ENCODE measurements at regions of chr12 and their contacts with region 1.

Region 1: GRCh38 chr12:20601668-20602280 is 93.4 kb upstream of the SLCO1C1 start:
- DNase-seq: no peak
- H3K4me3 ChIP-seq: no peak overlapping the region
- H3K27ac ChIP-seq: no peak overlapping the region
- H3K4me1 ChIP-seq: no peaks in the 10 kb centered on the region
- H3K27me3 ChIP-seq: no peaks in the 10 kb centered on the region
- CTCF ChIP-seq: peak in 2 of 3 experiments; percentile 14 to 35; a peak in 2 of 4 replicates
- EP300 ChIP-seq: no peak
- POLR2A ChIP-seq: no peak
- RAD21 ChIP-seq: peak; percentile 48 to 61

Region 2: GRCh38 chr12:20520532-20520931 is 81.2 kb before region 1 on chr12:
- CTCF ChIA-PET with region 1: no interaction called
- POLR2A ChIA-PET with region 1: no interaction called
- DNase-seq: no peak
- H3K4me3 ChIP-seq: no peak overlapping the region
- H3K27ac ChIP-seq: no peak overlapping the region
- H3K4me1 ChIP-seq: no peaks in the 10 kb centered on the region
- H3K27me3 ChIP-seq: no peaks in the 10 kb centered on the region
- CTCF ChIP-seq: no peak
- EP300 ChIP-seq: no peak
- POLR2A ChIP-seq: no peak
- RAD21 ChIP-seq: no peak

Region 3: DNA sequence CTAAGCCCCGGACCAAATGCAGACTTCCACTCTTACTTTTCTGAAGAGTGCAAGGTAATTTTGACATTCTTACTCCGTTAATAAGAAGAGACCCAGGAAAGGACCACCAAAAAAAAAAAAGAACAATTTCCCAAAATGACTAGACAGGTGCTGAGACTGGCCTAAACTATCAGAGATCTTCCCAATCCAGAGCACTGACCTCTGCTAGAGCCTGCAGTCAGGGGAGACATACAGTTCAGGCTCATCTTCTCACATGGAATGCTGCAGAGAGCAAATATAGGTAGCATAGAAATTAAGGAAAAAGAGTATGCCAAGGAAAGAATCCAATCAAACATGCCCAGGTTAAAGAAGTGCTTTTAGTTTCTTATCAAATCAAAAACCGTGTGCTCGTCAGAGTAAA is 55.5 kb before region 1 on chr12:
- CTCF ChIA-PET with region 1: no interaction called
- POLR2A ChIA-PET with region 1: no interaction called
- DNase-seq: no peak
- H3K4me3 ChIP-seq: no peak overlapping the region
- H3K27ac ChIP-seq: no peak overlapping the region
- H3K4me1 ChIP-seq: no peaks in the 10 kb centered on the region
- H3K27me3 ChIP-seq: no peaks in the 10 kb centered on the region
- CTCF ChIP-seq: no peak
- EP300 ChIP-seq: no peak
- POLR2A ChIP-seq: no peak
- RAD21 ChIP-seq: no peak

Region 4: GRCh38 chr12:20588042-20588441 is 13.7 kb before region 1 on chr12:
- CTCF ChIA-PET with region 1: interaction called, 14 read pairs
- POLR2A ChIA-PET with region 1: no interaction called
- DNase-seq: no peak
- H3K4me3 ChIP-seq: no peak overlapping the region
- H3K27ac ChIP-seq: no peak overlapping the region
- H3K4me1 ChIP-seq: peaks cover 0 to 8% (median 0%) of the 10 kb centered on the region in 4 experiments; a peak in 1 of 7 replicates
- H3K27me3 ChIP-seq: no peaks in the 10 kb centered on the region
- CTCF ChIP-seq: no peak
- EP300 ChIP-seq: no peak
- POLR2A ChIP-seq: no peak
- RAD21 ChIP-seq: no peak

Region 5: DNA sequence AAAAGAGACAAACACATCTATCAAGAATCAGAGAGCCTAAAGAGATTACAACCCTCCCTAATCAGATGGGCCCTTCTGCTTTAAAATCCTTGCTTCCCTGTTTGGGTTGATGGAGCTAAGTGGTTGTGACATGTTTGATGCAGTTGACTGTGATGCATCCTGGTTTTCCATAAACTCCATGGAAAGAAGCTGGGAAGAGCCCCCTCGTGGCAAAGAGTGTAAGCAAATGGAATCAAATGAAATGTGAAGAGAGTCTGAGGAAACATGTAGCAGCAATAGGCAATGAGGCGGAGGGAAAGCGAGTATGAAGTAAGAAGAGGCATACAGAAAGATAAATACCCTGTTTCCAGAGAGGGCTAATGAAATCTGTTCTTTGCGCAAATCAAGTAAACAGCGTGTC is 22.9 kb after region 1 on chr12:
- CTCF ChIA-PET with region 1: interaction called, 11 read pairs
- POLR2A ChIA-PET with region 1: no interaction called
- DNase-seq: no peak
- H3K4me3 ChIP-seq: no peak overlapping the region
- H3K27ac ChIP-seq: no peak overlapping the region
- H3K4me1 ChIP-seq: peaks cover 0 to 7% (median 5%) of the 10 kb centered on the region in 4 experiments; a peak in 4 of 7 replicates
- H3K27me3 ChIP-seq: no peaks in the 10 kb centered on the region
- CTCF ChIP-seq: peak in 2 of 3 experiments; percentile 60 to 67; a peak in 3 of 4 replicates
- EP300 ChIP-seq: no peak
- POLR2A ChIP-seq: no peak
- RAD21 ChIP-seq: peak; percentile 61 to 62

Measured in H1 (cell line).